ENCODE measurements at regions of chr18 and their contacts with region 1.

Region 1: DNA sequence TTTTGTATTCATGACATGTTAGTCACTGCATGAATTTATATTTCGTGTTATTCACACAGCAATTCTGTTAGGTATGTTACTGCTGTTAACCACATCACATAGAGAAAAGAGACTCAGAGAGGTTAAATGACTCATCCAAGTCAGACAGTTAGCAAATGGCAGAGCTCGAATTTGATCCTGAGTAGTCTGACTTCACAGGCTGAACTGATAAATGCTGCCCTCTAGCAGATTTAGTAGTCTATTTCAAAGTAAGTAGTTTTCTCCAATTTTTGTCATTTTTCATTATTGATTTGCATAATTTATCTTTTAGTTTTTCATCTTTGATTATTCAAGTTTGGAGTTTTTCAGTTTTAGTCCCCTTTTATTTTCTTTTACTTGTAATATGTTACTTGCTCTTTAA is 58.3 kb downstream of the WDR7 start:
- DNase-seq: peak; percentile 41
- H3K4me3 Mint-ChIP-seq: no peak overlapping the region
- H3K27ac Mint-ChIP-seq: no peak overlapping the region
- H3K4me1 Mint-ChIP-seq: peaks cover 28% of the 10 kb centered on the region
- H3K27me3 Mint-ChIP-seq: no peaks in the 10 kb centered on the region

Region 2: GRCh38 chr18:55415258-55415871 is 1294.1 kb before region 1 on chr18:
- intact Hi-C with region 1: loop called (anchors 1 kb)
- DNase-seq: peak; percentile 48
- H3K4me3 Mint-ChIP-seq: no peak overlapping the region
- H3K27ac Mint-ChIP-seq: no peak overlapping the region
- H3K4me1 Mint-ChIP-seq: no peaks in the 10 kb centered on the region
- H3K27me3 Mint-ChIP-seq: peaks cover 1% of the 10 kb centered on the region

Region 3: DNA sequence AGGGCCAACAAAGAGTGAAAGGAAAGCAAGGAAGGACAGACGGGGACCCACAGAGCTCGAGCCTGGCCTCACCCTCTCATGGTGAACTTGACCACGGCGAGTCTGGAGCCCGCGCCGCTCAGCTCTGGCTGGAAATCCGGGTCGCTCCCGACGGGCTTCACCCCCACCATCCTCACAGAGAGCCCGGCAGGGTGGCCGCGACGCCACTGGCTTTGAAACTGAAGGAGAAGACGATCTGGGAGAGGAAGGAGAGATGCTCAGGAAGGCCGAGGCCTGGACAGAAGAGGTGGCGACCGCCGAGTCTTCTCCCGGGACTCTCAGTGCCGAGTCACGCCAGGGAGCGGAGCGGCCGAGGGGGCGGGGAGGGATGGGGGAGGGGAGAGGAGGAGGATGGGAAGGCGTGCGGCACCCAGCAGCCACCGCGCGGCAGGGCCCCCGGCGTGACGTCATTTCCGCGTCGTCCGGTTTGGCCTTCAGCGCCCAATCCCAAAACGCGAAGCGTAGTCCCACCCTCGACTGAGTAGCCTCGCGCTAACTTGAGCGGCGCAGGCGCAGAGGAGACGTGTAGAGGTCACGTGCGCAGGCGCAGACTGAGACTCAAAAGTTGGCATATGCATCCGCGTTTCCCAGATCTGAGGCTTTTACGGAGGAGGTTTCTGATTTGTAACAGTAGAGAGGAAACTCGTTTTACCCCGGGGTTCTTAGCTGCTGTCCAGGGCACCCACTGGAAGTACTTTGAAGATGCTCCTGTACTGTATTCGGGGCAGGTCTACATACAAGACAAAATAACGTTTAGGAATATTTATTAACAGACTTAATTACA is 71.0 kb before region 1 on chr18 and contains the start of gene TXNL1:
- intact Hi-C with region 1: loop called (anchors 1 kb)
- DNase-seq: peak; percentile 98
- H3K4me3 Mint-ChIP-seq: peak within 1 kb of the TSS; percentile 99
- H3K27ac Mint-ChIP-seq: peak within 1 kb of the TSS; percentile 97
- H3K4me1 Mint-ChIP-seq: peaks cover 55% of the 10 kb centered on the region
- H3K27me3 Mint-ChIP-seq: no peaks in the 10 kb centered on the region
- total RNA-seq, gene TXNL1: 94.2 and 100 TPM in 2 replicates

Region 4: GRCh38 chr18:56650944-56651770 is 58.3 kb before region 1 on chr18 and contains the start of gene WDR7:
- intact Hi-C with region 1: loop called (anchors 1 kb)
- DNase-seq: peak; percentile 94
- H3K4me3 Mint-ChIP-seq: peak within 1 kb of the TSS; percentile 89
- H3K27ac Mint-ChIP-seq: peak within 1 kb of the TSS; percentile 94
- H3K4me1 Mint-ChIP-seq: peaks cover 72% of the 10 kb centered on the region
- H3K27me3 Mint-ChIP-seq: no peaks in the 10 kb centered on the region
- total RNA-seq, gene WDR7: 28.4 and 32.2 TPM in 2 replicates

Region 5: GRCh38 chr18:56748698-56749268 is 39.3 kb after region 1 on chr18:
- intact Hi-C with region 1: loop called (anchors 1 kb)
- DNase-seq: no peak
- H3K4me3 Mint-ChIP-seq: no peak overlapping the region
- H3K27ac Mint-ChIP-seq: no peak overlapping the region
- H3K4me1 Mint-ChIP-seq: peaks cover 22% of the 10 kb centered on the region
- H3K27me3 Mint-ChIP-seq: no peaks in the 10 kb centered on the region